ENCODE measurements at regions of chr2 and their contacts with region 1.

Region 1: DNA sequence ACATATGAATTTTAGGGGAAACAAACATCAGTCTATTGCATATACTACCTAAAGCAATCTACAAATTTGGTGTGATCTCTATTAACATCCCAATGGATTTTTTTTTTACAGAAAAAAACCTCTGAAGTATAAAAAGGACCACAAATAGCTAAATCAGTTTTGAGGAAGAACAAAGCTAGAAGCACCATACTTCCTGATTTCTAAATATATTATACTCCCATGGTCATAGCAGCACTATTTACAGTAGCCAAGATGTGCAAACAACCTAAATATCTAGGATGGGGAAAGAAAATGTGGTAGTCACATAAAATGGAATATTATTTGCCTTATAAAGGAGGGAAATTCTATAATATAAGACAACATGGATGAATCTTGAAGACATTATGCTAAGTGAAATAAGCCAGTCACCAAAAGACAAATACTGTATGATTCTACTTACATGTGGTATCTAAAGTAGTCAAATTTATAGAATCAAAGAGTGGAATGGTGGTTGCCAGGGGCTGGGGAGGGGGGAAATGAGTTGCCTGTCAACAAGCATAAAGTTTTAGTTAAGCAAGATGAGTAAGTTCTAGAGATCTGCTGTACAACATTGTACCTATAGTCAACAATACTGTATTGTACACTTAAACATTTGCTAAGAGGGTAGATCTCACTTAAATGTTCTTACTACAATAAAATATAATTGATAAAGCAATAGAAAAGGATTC is 17.6 kb upstream of the CASP8 start:
- DNase-seq: no peak
- H3K4me3 ChIP-seq: no peak overlapping the region
- H3K27ac ChIP-seq: no peak overlapping the region
- H3K4me1 ChIP-seq: no peaks in the 10 kb centered on the region; a peak in 1 of 4 replicates
- H3K27me3 ChIP-seq: no peaks in the 10 kb centered on the region
- CTCF ChIP-seq: no peak
- EP300 ChIP-seq: no peak
- RAD21 ChIP-seq: no peak

Region 2: DNA sequence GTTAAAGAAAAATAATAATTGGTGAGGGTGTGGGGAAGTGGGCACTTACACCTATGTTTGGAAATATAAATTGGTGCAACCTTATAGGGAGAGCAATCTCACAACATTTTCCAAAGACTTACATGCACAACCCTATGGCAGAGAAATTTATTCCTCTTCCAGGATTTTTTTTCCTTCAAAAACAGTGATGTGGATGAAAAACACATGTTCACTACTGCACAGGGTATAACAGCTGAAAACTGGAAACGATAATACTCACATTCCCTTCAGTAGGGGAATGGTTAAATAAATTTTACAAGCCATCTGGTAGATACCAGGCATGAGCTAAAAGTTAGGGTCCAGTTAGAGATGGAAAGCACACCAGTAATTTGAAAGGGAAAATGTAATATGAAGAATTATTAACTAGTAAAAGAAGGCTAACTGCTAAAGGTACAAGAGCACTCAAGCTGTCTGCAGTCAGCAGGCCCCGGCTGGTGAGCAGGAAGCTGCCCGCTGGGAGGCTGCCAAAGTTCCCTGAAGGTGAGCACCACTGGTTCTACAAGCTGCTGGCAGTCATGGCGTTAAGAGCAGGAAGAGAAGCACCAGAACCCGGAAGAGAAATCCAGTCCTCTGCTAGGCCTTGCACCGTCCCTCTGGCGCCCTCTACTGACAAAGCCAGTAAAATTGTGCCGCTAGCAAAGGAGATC is 10.8 kb before region 1 on chr2:
- CTCF ChIA-PET with region 1: interaction called, 10 read pairs
- POLR2A ChIA-PET with region 1: no interaction called
- DNase-seq: peak; percentile 74
- H3K4me3 ChIP-seq: peak overlapping the region in 1 of 2 experiments; percentile 19; a peak in 1 of 4 replicates
- H3K27ac ChIP-seq: peak overlapping the region in 1 of 2 experiments; percentile 72; a peak in 2 of 4 replicates
- H3K4me1 ChIP-seq: peaks cover 0 to 6% of the 10 kb centered on the region in 2 experiments; a peak in 2 of 4 replicates
- H3K27me3 ChIP-seq: no peaks in the 10 kb centered on the region
- CTCF ChIP-seq: peak; percentile 81
- EP300 ChIP-seq: no peak; a peak in 1 of 4 replicates
- RAD21 ChIP-seq: peak; percentile 71

Measured in SK-N-SH (cell line).